ENCODE measurements at regions of chr5 and their contacts with region 1.

Region 1: DNA sequence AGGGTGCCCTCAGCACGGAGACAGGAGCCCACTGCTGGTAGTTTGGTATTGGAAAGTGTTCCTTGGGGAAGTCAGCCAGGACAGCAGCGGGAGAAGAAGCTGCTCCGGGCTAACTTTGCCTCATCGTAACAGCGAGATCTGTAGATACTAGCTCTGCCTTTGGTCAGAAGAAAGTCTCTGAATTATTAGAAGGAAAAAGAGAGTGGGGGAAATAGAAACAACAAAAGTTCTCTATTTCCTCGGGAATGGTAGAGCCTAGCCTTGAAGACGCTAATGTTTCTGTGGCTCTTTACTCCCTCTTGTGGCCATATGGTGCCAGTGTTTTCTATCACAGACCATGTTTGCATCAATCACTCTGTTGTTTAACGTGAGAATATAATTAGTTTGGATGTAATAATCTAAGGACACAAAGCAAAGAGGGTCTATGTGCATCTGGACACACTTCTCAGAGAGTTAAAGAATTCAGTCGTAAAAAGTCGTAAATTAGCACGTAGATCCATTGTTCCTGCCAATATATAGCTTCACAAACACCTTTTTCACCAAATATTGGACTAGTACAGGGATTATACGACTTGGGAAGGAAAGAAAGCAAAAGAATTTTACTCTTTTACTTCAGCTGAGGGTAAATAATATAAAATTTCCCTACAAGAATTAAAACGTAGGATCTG is 40.2 kb upstream of the HSD17B4 start:
- DNase-seq: peak; percentile 87
- H3K4me3 ChIP-seq: peak overlapping the region; percentile 22 to 90 (median 79)
- H3K27ac ChIP-seq: peak overlapping the region; percentile 47
- H3K4me1 ChIP-seq: peaks cover 4% of the 10 kb centered on the region
- H3K27me3 ChIP-seq: peaks cover 5 to 12% of the 10 kb centered on the region in 2 experiments
- CTCF ChIP-seq: peak; percentile 70 to 78
- POLR2A ChIP-seq: no peak

Region 2: GRCh38 chr5:119022017-119022745 is 389.9 kb before region 1 on chr5:
- CTCF ChIA-PET with region 1: interaction called, 153 read pairs
- POLR2A ChIA-PET with region 1: no interaction called
- dilution Hi-C with region 1: no loop called
- intact Hi-C with region 1: loop called (anchors 1 kb)
- DNase-seq: peak; percentile 58
- H3K4me3 ChIP-seq: no peak overlapping the region
- H3K27ac ChIP-seq: no peak overlapping the region
- H3K4me1 ChIP-seq: no peaks in the 10 kb centered on the region
- H3K27me3 ChIP-seq: no peaks in the 10 kb centered on the region
- CTCF ChIP-seq: no peak
- POLR2A ChIP-seq: no peak

Region 3: DNA sequence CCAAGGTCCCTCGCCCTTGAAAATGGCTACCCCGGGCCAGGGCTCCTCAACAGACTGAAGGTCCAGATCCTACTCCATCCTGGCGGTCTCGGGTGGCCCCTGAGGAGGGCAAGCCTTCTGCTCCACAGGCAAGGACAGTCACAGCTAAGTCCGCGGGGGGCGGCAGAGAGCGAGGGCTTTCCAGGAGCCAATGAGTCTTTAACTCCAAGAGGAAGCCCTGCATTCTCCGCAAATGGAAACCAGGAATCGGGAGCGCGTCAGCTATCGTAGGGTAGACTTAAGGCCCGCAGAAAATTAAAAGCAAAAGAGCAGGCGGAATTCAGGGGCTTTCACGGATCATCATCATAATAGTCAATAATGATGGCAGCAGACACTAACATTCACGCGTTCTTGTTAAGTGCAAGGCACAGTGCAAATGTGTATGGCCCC is 144.1 kb before region 1 on chr5:
- CTCF ChIA-PET with region 1: interaction called, 25 read pairs
- POLR2A ChIA-PET with region 1: interaction called, 3 read pairs
- dilution Hi-C with region 1: no loop called
- intact Hi-C with region 1: loop called (anchors 1 kb)
- DNase-seq: peak; percentile 97
- H3K4me3 ChIP-seq: peak overlapping the region; percentile 73 to 99 (median 96)
- H3K27ac ChIP-seq: peak overlapping the region; percentile 75
- H3K4me1 ChIP-seq: peaks cover 9% of the 10 kb centered on the region
- H3K27me3 ChIP-seq: peaks cover 2 to 7% of the 10 kb centered on the region in 2 experiments
- CTCF ChIP-seq: peak; percentile 62 to 71
- POLR2A ChIP-seq: no peak

Region 4: DNA sequence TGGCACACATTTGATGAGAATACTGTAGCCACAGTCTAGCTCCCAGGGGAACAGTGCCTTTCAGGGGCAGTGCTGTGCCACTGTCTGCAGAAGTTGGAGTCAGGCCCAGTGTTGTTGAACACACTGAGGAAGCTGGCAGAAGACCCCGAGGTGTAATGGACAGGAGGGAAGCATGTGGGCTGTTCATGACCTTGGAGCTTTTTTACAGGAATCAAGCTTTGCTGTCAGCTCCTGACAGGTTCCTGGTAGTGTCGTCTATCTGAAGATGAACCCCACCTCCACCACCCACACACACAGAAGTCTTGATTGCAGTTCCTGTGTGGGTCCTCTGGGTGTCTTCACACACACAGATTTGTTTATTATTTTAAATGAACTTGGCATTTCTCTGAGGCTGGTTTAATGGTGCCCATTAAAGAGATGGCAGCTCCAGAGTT is 96.5 kb before region 1 on chr5:
- CTCF ChIA-PET with region 1: interaction called, 19 read pairs
- POLR2A ChIA-PET with region 1: no interaction called
- dilution Hi-C with region 1: no loop called
- intact Hi-C with region 1: loop called (anchors 1 kb)
- DNase-seq: peak; percentile 43
- H3K4me3 ChIP-seq: no peak overlapping the region
- H3K27ac ChIP-seq: no peak overlapping the region
- H3K4me1 ChIP-seq: no peaks in the 10 kb centered on the region
- H3K27me3 ChIP-seq: no peaks in the 10 kb centered on the region
- CTCF ChIP-seq: peak; percentile 12 to 21
- POLR2A ChIP-seq: no peak

Region 5: DNA sequence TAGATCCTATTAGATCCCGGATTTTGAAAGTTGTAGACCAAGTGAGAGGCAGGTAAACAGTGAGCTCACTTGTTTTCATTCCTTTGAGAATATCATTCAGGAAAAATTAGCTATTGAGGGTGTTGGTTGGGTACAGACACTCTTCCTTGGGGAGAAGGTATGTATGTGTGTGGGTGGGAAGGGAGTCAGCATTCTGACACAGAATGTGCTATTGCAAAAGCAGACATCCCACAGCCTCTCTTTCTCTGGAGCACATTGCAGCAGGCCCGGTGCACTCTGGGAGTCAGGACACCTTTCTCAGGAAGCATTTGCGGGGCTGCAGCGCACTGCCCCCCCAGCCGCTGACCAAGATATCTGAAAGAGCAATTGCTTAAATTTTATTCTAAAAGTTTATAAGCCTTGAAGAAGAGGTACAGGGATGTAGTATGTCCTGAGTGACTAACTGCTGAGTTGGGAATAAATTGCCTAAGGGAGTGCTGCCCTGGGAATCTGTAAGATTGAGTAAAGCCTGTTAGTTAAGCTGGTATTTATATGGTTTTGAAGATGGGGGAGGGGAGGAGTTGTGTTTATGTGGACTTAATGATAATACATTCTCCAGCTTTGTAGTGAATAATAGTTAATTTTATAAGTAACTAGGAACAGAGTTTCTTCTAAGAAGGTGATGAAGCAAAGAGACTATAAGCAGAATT is 51.0 kb before region 1 on chr5:
- CTCF ChIA-PET with region 1: interaction called, 22 read pairs
- POLR2A ChIA-PET with region 1: no interaction called
- dilution Hi-C with region 1: no loop called
- intact Hi-C with region 1: no loop called
- DNase-seq: no peak
- H3K4me3 ChIP-seq: no peak overlapping the region
- H3K27ac ChIP-seq: no peak overlapping the region
- H3K4me1 ChIP-seq: peaks cover 6% of the 10 kb centered on the region
- H3K27me3 ChIP-seq: peaks cover 0 to 1% of the 10 kb centered on the region in 2 experiments
- CTCF ChIP-seq: no peak
- POLR2A ChIP-seq: no peak

Measured in endothelial cell of umbilical vein (primary cell).